MCF 10A (cell line): ENCODE measurements at regions of chr2 and their contacts with region 1.

Region 1: GRCh38 chr2:36672199-36672598 is 24.3 kb upstream of the VIT start:
- DNase-seq: peak; percentile 65
- H3K4me3 Mint-ChIP-seq: no peak overlapping the region
- H3K27ac Mint-ChIP-seq: no peak overlapping the region
- H3K4me1 Mint-ChIP-seq: peaks cover 5% of the 10 kb centered on the region
- H3K27me3 Mint-ChIP-seq: no peaks in the 10 kb centered on the region
- CTCF ChIP-seq: peak; percentile 53

Region 2: GRCh38 chr2:35168354-35168753 is 1503.8 kb before region 1 on chr2:
- CTCF ChIA-PET with region 1: no interaction called
- POLR2A ChIA-PET with region 1: no interaction called
- intact Hi-C with region 1: loop called (anchors 10 kb)
- DNase-seq: peak; percentile 9
- H3K4me3 Mint-ChIP-seq: no peak overlapping the region
- H3K27ac Mint-ChIP-seq: no peak overlapping the region
- H3K4me1 Mint-ChIP-seq: no peaks in the 10 kb centered on the region
- H3K27me3 Mint-ChIP-seq: peaks cover 69% of the 10 kb centered on the region
- CTCF ChIP-seq: peak; percentile 31

Region 3: GRCh38 chr2:35973132-35973736 is 699.0 kb before region 1 on chr2:
- CTCF ChIA-PET with region 1: no interaction called
- POLR2A ChIA-PET with region 1: no interaction called
- intact Hi-C with region 1: loop called (anchors 5 kb)
- DNase-seq: peak; percentile 51
- H3K4me3 Mint-ChIP-seq: no peak overlapping the region
- H3K27ac Mint-ChIP-seq: no peak overlapping the region
- H3K4me1 Mint-ChIP-seq: peaks cover 6% of the 10 kb centered on the region
- H3K27me3 Mint-ChIP-seq: peaks cover 48% of the 10 kb centered on the region
- CTCF ChIP-seq: peak; percentile 33

Region 4: GRCh38 chr2:36266536-36267121 is 405.6 kb before region 1 on chr2:
- CTCF ChIA-PET with region 1: no interaction called
- POLR2A ChIA-PET with region 1: no interaction called
- intact Hi-C with region 1: no loop called
- DNase-seq: no peak
- H3K4me3 Mint-ChIP-seq: no peak overlapping the region
- H3K27ac Mint-ChIP-seq: no peak overlapping the region
- H3K4me1 Mint-ChIP-seq: no peaks in the 10 kb centered on the region
- H3K27me3 Mint-ChIP-seq: peaks cover 82% of the 10 kb centered on the region
- CTCF ChIP-seq: no peak